Activated naive CD4-positive, alpha-beta T cell treated with anti-CD3 and anti-CD28 coated beads, Interleukin-2, amount 10 ng/mL, durations not matched to agents 7 days and 5 days (primary cell): ENCODE measurements at regions of chr14 and their contacts with region 1.

Region 1: GRCh38 chr14:74608959-74609611 is 3.0 kb downstream of the LTBP2 start:
- DNase-seq: peak; percentile 92
- H3K4me3 Mint-ChIP-seq: no peak overlapping the region
- H3K27ac Mint-ChIP-seq: no peak overlapping the region
- H3K4me1 Mint-ChIP-seq: peaks cover 13% of the 10 kb centered on the region
- H3K27me3 Mint-ChIP-seq: peaks cover 69% of the 10 kb centered on the region

Region 2: GRCh38 chr14:74524076-74524811 is 84.8 kb before region 1 on chr14:
- CTCF ChIA-PET with region 1: no interaction called
- DNase-seq: no peak
- H3K4me3 Mint-ChIP-seq: no peak overlapping the region
- H3K27ac Mint-ChIP-seq: no peak overlapping the region
- H3K4me1 Mint-ChIP-seq: no peaks in the 10 kb centered on the region
- H3K27me3 Mint-ChIP-seq: peaks cover 44% of the 10 kb centered on the region

Region 3: GRCh38 chr14:74804219-74804826 is 195.2 kb after region 1 on chr14:
- CTCF ChIA-PET with region 1: interaction called, 26 read pairs
- DNase-seq: peak; percentile 54
- H3K4me3 Mint-ChIP-seq: no peak overlapping the region
- H3K27ac Mint-ChIP-seq: peak overlapping the region; percentile 38
- H3K4me1 Mint-ChIP-seq: no peaks in the 10 kb centered on the region
- H3K27me3 Mint-ChIP-seq: no peaks in the 10 kb centered on the region